ENCODE measurements at regions of chr2 and their contacts with region 1.

Region 1: DNA sequence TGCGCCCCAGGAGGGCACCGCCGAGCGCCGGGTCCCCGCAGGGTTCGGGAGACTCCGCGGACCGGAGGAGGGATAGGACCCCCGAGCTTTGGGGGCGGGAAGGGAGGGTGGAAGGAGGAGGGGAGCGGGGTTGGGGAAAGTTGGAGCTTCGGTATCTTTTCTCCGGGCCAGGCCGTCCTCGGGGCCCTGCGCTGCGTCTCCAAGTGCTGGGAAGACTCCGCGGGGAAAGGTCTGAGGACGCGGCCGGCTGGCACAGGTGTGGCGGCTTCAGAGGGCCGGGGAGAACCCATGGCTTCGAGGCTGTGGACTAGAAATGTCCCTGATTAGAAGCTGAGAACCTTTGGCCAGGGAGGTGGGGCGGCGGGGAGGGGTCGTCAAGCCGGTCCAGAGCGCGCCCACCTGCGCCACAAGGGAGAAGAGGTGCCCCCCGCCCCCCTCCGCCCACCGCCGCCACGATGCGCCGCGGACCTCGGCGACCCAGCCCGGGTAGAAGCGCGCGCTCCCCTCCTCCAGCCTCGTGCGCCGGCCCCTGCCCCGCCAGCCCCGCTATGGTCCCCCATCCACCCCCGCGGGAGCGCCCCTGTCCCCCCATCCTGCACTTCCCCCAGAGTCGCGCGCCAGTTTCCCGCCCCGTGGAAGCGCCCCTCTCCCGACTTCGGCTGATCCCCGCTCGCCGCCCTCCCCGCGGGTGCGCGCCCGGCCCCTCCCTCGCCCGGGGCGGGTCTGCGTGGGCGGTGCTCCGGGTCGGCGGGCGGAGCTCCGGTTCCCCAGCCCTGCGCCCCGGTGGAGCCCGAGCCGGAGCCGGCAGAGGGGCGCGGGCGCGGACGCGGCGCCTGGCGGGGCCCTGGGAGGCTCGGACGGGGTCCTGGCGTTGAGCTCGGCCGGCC is at the start of gene SNTG2:
- DNase-seq: peak; percentile 61
- H3K4me3 Mint-ChIP-seq: peak within 1 kb of the TSS; percentile 58
- H3K27ac Mint-ChIP-seq: no peak within 1 kb of the TSS
- H3K4me1 Mint-ChIP-seq: peaks cover 28% of the 10 kb centered on the region
- H3K27me3 Mint-ChIP-seq: peaks cover 37% of the 10 kb centered on the region
- total RNA-seq, gene SNTG2: 0.67 to 0.94 TPM

Region 2: GRCh38 chr2:705971-706511 is 244.3 kb before region 1 on chr2:
- CTCF ChIA-PET with region 1: interaction called, 3 read pairs
- POLR2A ChIA-PET with region 1: no interaction called
- intact Hi-C with region 1: loop called (anchors 1 kb)
- DNase-seq: peak; percentile 73
- H3K4me3 Mint-ChIP-seq: no peak overlapping the region
- H3K27ac Mint-ChIP-seq: no peak overlapping the region
- H3K4me1 Mint-ChIP-seq: peaks cover 16% of the 10 kb centered on the region
- H3K27me3 Mint-ChIP-seq: peaks cover 23% of the 10 kb centered on the region

Region 3: GRCh38 chr2:1032030-1032429 is 81.7 kb after region 1 on chr2:
- CTCF ChIA-PET with region 1: no interaction called
- POLR2A ChIA-PET with region 1: no interaction called
- intact Hi-C with region 1: loop called (anchors 5 kb)
- DNase-seq: peak; percentile 69
- H3K4me3 Mint-ChIP-seq: peak overlapping the region; percentile 56
- H3K27ac Mint-ChIP-seq: no peak overlapping the region
- H3K4me1 Mint-ChIP-seq: peaks cover 14% of the 10 kb centered on the region
- H3K27me3 Mint-ChIP-seq: no peaks in the 10 kb centered on the region

Region 4: GRCh38 chr2:1550658-1551316 is 600.5 kb after region 1 on chr2:
- CTCF ChIA-PET with region 1: no interaction called
- POLR2A ChIA-PET with region 1: no interaction called
- intact Hi-C with region 1: loop called (anchors 5 kb)
- DNase-seq: peak; percentile 65
- H3K4me3 Mint-ChIP-seq: no peak overlapping the region
- H3K27ac Mint-ChIP-seq: no peak overlapping the region
- H3K4me1 Mint-ChIP-seq: peaks cover 4% of the 10 kb centered on the region
- H3K27me3 Mint-ChIP-seq: peaks cover 1% of the 10 kb centered on the region

Region 5: DNA sequence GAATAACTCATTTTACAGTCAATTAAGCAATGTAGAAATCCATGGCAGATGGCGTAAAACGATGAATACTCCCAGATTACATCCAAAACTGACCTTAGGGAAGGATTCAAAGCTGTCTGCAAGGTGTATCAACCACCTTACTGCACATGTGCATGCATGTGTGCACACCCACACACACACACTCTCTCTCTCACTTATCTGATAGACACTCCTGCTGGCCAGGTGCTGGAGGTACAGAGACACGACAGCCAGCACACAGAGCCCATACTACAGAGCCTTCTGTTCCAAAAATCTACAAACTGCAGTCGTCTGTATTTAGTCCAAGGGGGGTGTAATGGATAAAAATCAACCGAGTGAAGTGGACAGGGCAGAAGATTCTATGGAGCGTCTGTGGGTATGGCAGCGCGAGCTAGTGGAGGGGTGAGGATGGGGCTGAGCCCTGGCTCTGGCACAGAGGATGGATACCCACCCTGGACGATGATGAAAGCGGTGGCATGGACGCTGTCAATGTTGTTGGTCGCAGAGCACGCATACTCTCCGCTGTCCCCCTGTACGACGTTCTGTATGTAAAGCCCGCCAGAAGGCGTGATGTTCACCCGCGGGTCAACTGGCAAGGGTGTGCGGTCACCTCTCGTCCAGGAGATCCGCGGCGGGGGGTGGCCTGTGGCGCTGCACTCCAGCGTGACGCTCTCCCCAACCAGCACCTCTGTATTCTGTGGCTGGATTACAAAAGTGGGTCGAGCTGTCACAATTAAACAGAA is 715.6 kb after region 1 on chr2:
- CTCF ChIA-PET with region 1: no interaction called
- POLR2A ChIA-PET with region 1: no interaction called
- intact Hi-C with region 1: no loop called
- DNase-seq: no peak
- H3K4me3 Mint-ChIP-seq: no peak overlapping the region
- H3K27ac Mint-ChIP-seq: no peak overlapping the region
- H3K4me1 Mint-ChIP-seq: no peaks in the 10 kb centered on the region
- H3K27me3 Mint-ChIP-seq: peaks cover 6% of the 10 kb centered on the region